Panc1 (cell line): ENCODE measurements at regions of chr20 and their contacts with region 1.

Region 1: GRCh38 chr20:37755665-37756064 is 61.8 kb downstream of the CTNNBL1 start:
- DNase-seq: no peak
- ATAC-seq: no peak
- H3K4me3 ChIP-seq: no peak overlapping the region
- H3K27ac ChIP-seq: no peak overlapping the region
- H3K4me1 ChIP-seq: no peaks in the 10 kb centered on the region
- H3K27me3 ChIP-seq: no peaks in the 10 kb centered on the region
- CTCF ChIP-seq: no peak

Region 2: GRCh38 chr20:37680420-37680819 is 75.2 kb before region 1 on chr20:
- CTCF ChIA-PET with region 1: no interaction called
- POLR2A ChIA-PET with region 1: no interaction called
- in situ Hi-C with region 1: no loop called
- intact Hi-C with region 1: no loop called
- DNase-seq: no peak
- ATAC-seq: no peak
- H3K4me3 ChIP-seq: no peak overlapping the region
- H3K27ac ChIP-seq: no peak overlapping the region
- H3K4me1 ChIP-seq: no peaks in the 10 kb centered on the region
- H3K27me3 ChIP-seq: peaks cover 3% of the 10 kb centered on the region
- CTCF ChIP-seq: no peak

Region 3: GRCh38 chr20:37715003-37715672 is 40.5 kb before region 1 on chr20:
- CTCF ChIA-PET with region 1: no interaction called
- POLR2A ChIA-PET with region 1: interaction called, 14 read pairs
- in situ Hi-C with region 1: no loop called
- intact Hi-C with region 1: no loop called
- DNase-seq: no peak
- ATAC-seq: no peak
- H3K4me3 ChIP-seq: no peak overlapping the region
- H3K27ac ChIP-seq: no peak overlapping the region
- H3K4me1 ChIP-seq: no peaks in the 10 kb centered on the region
- H3K27me3 ChIP-seq: no peaks in the 10 kb centered on the region
- CTCF ChIP-seq: no peak

Region 4: GRCh38 chr20:37821696-37822095 is 66.0 kb after region 1 on chr20:
- CTCF ChIA-PET with region 1: no interaction called
- POLR2A ChIA-PET with region 1: no interaction called
- in situ Hi-C with region 1: no loop called
- intact Hi-C with region 1: no loop called
- DNase-seq: no peak
- ATAC-seq: no peak
- H3K4me3 ChIP-seq: no peak overlapping the region
- H3K27ac ChIP-seq: no peak overlapping the region
- H3K4me1 ChIP-seq: no peaks in the 10 kb centered on the region
- H3K27me3 ChIP-seq: no peaks in the 10 kb centered on the region
- CTCF ChIP-seq: no peak

Region 5: GRCh38 chr20:37943501-37944455 is 188.1 kb after region 1 on chr20:
- CTCF ChIA-PET with region 1: no interaction called
- POLR2A ChIA-PET with region 1: interaction called, 10 read pairs
- in situ Hi-C with region 1: no loop called
- intact Hi-C with region 1: no loop called
- DNase-seq: no peak
- ATAC-seq: 0 out of 2 replicates have a peak, but pooled peaks have one; percentile 54
- H3K4me3 ChIP-seq: no peak overlapping the region
- H3K27ac ChIP-seq: no peak overlapping the region
- H3K4me1 ChIP-seq: peaks cover 7% of the 10 kb centered on the region
- H3K27me3 ChIP-seq: no peaks in the 10 kb centered on the region
- CTCF ChIP-seq: no peak; the same call in 1 of the 2 replicates

Region 6: GRCh38 chr20:38065764-38066375 is 310.2 kb after region 1 on chr20:
- CTCF ChIA-PET with region 1: no interaction called
- POLR2A ChIA-PET with region 1: no interaction called
- in situ Hi-C with region 1: no loop called
- intact Hi-C with region 1: no loop called
- DNase-seq: no peak
- ATAC-seq: no peak
- H3K4me3 ChIP-seq: no peak overlapping the region
- H3K27ac ChIP-seq: no peak overlapping the region
- H3K4me1 ChIP-seq: no peaks in the 10 kb centered on the region
- H3K27me3 ChIP-seq: no peaks in the 10 kb centered on the region
- CTCF ChIP-seq: no peak